ENCODE measurements at regions of chr16 and their contacts with region 1.

Region 1: DNA sequence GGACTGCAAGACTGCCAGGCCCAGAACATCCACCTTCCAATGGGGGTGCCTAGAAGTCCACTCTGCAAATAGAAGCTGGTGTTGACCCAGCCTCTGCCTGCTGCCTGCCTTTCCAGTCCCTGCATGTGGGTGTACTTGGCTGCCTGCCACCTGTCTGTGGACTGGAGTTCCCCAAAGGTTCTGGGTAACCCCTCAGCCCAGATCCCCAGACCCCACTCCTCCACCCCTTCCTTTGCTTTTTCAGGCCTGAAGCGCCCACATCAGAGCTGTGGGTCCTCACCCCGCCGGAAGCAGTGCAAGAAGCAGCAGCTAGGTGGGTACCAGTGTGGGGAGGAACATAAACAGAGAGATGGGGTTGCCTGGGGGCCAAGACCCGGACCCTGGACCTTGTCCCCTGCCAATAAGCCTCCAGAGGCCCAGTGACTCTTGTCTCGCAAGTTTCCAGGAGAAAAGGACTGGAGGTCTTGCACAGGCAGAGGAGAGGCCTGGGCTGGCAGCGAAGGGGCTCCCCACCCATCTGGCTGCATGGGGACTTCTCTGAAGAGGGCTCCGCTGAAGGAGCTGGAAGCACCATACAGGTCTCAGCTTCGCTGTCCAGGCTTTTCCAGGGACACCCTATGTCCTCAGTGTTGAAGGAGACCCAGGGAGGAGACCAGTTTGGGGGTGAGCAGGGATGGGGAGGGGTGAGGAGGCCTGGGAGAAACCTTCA is 34.3 kb downstream of the NLRC5 start:
- DNase-seq: peak; percentile 54 to 80 (median 70)
- ATAC-seq: peak; percentile 95
- H3K4me3 ChIP-seq: peak overlapping the region; percentile 25
- H3K4me3 Mint-ChIP-seq: peak overlapping the region; percentile 60 to 87 (median 75)
- H3K27ac ChIP-seq: peak overlapping the region; percentile 68
- H3K27ac Mint-ChIP-seq: peak overlapping the region; percentile 77 to 94 (median 90)
- H3K4me1 ChIP-seq: peaks cover 53 to 79% of the 10 kb centered on the region in 2 donors
- H3K4me1 Mint-ChIP-seq: peaks cover 74 to 99% (median 92%) of the 10 kb centered on the region in 7 donors
- H3K27me3 ChIP-seq: no peaks in the 10 kb centered on the region
- H3K27me3 Mint-ChIP-seq: no peaks in the 10 kb centered on the region

Region 2: GRCh38 chr16:56994311-56994710 is 29.4 kb before region 1 on chr16:
- CTCF ChIA-PET with region 1: no interaction called
- POLR2A ChIA-PET with region 1: interaction called, 111 read pairs
- intact Hi-C with region 1: no loop called
- DNase-seq: no peak
- ATAC-seq: no peak
- H3K4me3 ChIP-seq: peak overlapping the region; percentile 19
- H3K4me3 Mint-ChIP-seq: peak overlapping the region; percentile 36 to 98 (median 84)
- H3K27ac ChIP-seq: peak overlapping the region; percentile 77
- H3K27ac Mint-ChIP-seq: peak overlapping the region; percentile 80 to 96 (median 88)
- H3K4me1 ChIP-seq: peaks cover 54 to 62% of the 10 kb centered on the region in 2 donors
- H3K4me1 Mint-ChIP-seq: peaks cover 66 to 90% (median 80%) of the 10 kb centered on the region in 7 donors
- H3K27me3 ChIP-seq: no peaks in the 10 kb centered on the region
- H3K27me3 Mint-ChIP-seq: no peaks in the 10 kb centered on the region